Mammary epithelial cell (primary cell): ENCODE measurements at regions of chr6 and their contacts with region 1.

Region 1: GRCh38 chr6:145137426-145137825 is 597.9 kb downstream of the EPM2A start:
- DNase-seq: no peak
- H3K4me3 ChIP-seq: no peak overlapping the region
- H3K27ac ChIP-seq: no peak overlapping the region
- H3K4me1 ChIP-seq: no peaks in the 10 kb centered on the region
- H3K27me3 ChIP-seq: peaks cover 2% of the 10 kb centered on the region
- CTCF ChIP-seq: peak; percentile 21 to 44

Region 2: DNA sequence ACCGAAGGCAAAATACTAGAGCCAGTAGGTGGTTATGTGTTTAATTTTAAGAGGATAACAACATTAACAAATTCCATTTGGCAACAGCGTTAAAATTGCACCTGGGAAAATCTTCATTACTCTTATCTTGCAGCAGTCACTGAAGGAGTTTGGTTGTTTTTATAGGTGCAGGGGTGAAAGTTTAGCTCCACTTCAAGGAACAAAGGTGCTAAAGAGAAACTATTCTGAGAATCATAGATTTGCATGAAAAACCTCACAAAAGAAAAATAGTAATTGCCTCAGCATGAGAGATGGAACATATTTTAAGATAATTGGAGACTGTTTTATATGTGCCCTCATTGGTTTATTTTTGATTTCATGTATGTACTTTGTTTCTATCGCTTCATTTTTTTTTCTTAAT is 407.9 kb before region 1 on chr6:
- CTCF ChIA-PET with region 1: no interaction called
- dilution Hi-C with region 1: no loop called
- in situ Hi-C with region 1: no loop called
- intact Hi-C with region 1: no loop called
- DNase-seq: no peak
- H3K4me3 ChIP-seq: no peak overlapping the region
- H3K27ac ChIP-seq: no peak overlapping the region
- H3K4me1 ChIP-seq: peaks cover 13% of the 10 kb centered on the region
- H3K27me3 ChIP-seq: no peaks in the 10 kb centered on the region
- CTCF ChIP-seq: no peak

Region 3: DNA sequence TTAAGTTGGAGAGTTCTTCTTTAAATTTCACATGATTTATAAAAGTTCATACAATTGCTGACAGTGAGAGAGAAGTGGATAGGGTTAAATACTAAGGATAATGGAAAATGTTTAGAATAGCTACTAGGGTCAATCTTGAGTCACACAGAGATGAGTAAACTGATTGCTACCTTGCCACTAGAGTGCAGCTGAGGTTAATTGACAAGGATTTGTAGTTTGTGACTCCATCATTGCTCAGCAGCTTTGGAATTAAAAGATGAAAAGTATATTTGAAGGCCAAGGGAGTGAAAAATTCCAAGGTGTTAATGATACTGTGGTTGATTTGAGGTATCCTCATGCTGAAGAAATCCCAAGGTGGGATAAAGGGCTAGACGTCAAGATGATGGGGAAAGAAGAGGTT is 328.3 kb before region 1 on chr6:
- CTCF ChIA-PET with region 1: no interaction called
- dilution Hi-C with region 1: no loop called
- in situ Hi-C with region 1: no loop called
- intact Hi-C with region 1: loop called (anchors 5 kb)
- DNase-seq: peak; percentile 59
- H3K4me3 ChIP-seq: no peak overlapping the region
- H3K27ac ChIP-seq: no peak overlapping the region
- H3K4me1 ChIP-seq: peaks cover 8% of the 10 kb centered on the region
- H3K27me3 ChIP-seq: no peaks in the 10 kb centered on the region
- CTCF ChIP-seq: peak in 1 of 2 donors; percentile 40